Right ventricle myocardium inferior (tissue), 1 donor: ENCODE measurements at regions of chr4 and their contacts with region 1.

Region 1: DNA sequence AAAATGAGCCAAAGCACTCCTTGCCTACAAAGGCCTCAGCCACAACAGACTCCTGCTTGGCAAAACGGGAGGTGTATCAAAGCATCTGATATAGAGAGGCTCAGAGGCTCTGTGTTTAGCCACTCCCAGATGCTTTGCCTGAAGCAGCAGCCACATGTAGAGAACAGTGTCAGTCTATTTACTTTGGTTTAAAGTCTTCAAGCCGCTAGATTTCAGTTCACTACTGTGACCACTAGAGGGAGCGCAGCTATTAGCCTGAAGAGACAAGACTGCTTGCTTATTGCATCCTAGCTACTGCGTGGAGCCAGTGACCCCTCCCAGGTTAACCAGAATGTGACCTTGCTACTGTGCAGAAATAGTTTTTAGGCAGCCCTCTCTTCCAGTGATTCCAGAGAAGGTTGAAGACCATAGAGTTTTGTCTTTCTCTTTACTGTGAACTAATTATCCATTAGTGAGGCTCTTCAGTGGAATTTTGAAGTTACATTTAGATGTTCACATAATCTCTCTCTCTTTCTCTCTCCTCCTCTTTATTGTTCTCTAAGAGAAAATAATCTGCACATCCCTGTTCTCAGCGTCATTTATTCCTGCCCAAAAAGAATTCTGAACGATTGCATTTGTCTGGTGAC is 39.3 kb downstream of the BMP3 start:
- DNase-seq: no peak
- ATAC-seq: peak; percentile 65

Region 2: GRCh38 chr4:81003597-81004111 is 66.2 kb before region 1 on chr4:
- intact Hi-C with region 1: no loop called
- DNase-seq: no peak
- ATAC-seq: no peak

Region 3: DNA sequence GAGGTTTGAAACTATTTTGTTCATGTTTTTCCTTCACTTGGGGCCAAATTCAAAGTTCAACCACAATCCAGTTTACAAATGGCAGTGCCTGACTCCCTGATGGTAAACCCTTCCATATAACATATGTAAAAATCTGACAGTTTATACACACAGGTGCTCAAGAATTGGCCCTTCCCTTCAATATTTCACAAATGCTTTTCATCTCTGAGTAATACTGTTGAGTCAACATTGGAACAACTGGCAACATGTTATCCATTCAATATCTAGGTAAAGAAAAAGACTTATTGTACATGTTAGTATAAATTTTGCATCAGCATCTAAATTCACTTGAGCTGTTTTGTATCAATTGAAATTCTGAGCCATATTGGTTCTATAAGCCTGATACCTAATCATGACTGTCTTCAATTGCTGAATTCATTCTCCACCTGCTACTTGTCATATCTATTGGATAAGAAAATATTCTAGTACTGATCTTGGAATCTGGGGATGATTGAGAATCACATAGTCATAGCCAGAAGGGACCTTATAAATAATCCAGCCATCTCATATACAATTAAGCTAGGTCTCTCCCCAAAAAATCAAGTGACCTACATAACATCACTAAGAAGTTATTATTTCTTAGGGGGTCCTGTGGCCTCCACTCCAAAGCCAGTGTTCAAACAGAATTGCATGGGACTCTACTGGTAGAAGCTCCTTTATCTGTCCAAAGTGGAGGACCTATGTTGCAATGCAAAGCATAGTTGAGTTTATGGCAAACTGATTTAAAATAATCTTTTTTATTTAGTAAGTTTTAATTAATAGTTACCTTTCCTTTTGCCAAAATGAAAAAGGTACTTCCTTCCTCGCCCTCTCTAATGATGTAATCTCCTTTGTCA is 83.3 kb after region 1 on chr4:
- intact Hi-C with region 1: no loop called
- DNase-seq: no peak
- ATAC-seq: no peak

Region 4: GRCh38 chr4:81351654-81352445 is 282.0 kb after region 1 on chr4:
- intact Hi-C with region 1: loop called (anchors 2 kb)
- DNase-seq: no peak
- ATAC-seq: no peak